ENCODE measurements at regions of chr6 and their contacts with region 1.

Region 1: DNA sequence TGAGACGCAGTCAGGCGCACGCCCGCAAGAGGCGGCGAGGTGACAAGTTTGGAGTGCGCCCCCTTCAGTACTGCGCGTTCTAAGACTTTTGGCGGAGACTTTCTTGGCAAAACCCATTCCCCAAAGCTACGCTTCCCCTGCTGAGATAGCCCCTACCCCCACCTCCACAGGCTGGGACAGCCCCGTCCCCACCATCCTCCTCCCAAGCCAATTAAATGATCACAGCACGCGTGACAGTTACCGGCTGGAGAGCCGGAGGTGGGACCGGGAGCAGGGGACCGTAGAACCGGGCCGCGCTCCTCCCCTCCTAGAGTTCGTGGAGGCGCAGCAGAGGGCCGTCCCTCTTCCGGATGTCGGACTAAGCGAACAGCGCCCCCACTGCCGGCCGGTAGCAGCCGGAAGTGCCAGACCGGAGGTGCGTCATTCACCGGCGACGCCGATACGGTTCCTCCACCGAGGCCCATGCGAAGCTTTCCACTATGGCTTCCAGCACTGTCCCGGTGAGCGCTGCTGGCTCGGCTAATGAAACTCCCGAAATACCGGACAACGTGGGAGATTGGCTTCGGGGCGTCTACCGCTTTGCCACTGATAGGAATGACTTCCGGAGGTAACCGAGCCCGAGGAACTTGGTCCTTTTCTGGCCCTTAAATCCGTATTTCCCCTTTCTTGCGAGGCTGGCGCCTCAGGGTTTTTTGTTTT is at the start of gene TOMM6:
- DNase-seq: peak; percentile 97
- H3K4me3 ChIP-seq: peak within 1 kb of the TSS; percentile 68 to 89 (median 83)
- H3K27ac ChIP-seq: peak within 1 kb of the TSS; percentile 91 to 98 (median 96)
- H3K4me1 ChIP-seq: peaks cover 0 to 32% (median 23%) of the 10 kb centered on the region in 4 donors
- H3K27me3 ChIP-seq: no peaks in the 10 kb centered on the region
- CTCF ChIP-seq: peak; percentile 86 to 98 (median 93)
- EP300 ChIP-seq: peak in 1 of 4 donors; percentile 45
- POLR2A ChIP-seq: peak; percentile 71 to 95
- total RNA-seq, gene TOMM6: 116 to 154 (median 151) TPM

Region 2: GRCh38 chr6:41072676-41073623 is 714.4 kb before region 1 on chr6 and contains the start of gene NFYA:
- intact Hi-C with region 1: loop called (anchors 10 kb)
- DNase-seq: peak; percentile 100
- H3K4me3 ChIP-seq: peak within 1 kb of the TSS; percentile 78 to 96 (median 90)
- H3K27ac ChIP-seq: peak within 1 kb of the TSS; percentile 96 to 100 (median 99)
- H3K4me1 ChIP-seq: peaks cover 0 to 32% (median 27%) of the 10 kb centered on the region in 4 donors
- H3K27me3 ChIP-seq: no peaks in the 10 kb centered on the region
- CTCF ChIP-seq: peak in 2 of 4 experiments; percentile 7 to 39
- EP300 ChIP-seq: no peak
- POLR2A ChIP-seq: peak; percentile 32 to 45
- total RNA-seq, gene NFYA: 7.6 to 12.1 (median 10.9) TPM

Region 3: GRCh38 chr6:41675176-41675770 is 112.1 kb before region 1 on chr6:
- intact Hi-C with region 1: no loop called
- DNase-seq: no peak
- H3K4me3 ChIP-seq: no peak overlapping the region
- H3K27ac ChIP-seq: no peak overlapping the region
- H3K4me1 ChIP-seq: no peaks in the 10 kb centered on the region
- H3K27me3 ChIP-seq: peaks cover 0 to 5% (median 0%) of the 10 kb centered on the region in 3 donors
- CTCF ChIP-seq: no peak
- EP300 ChIP-seq: no peak
- POLR2A ChIP-seq: no peak

Region 4: GRCh38 chr6:41705996-41706835 is 81.2 kb before region 1 on chr6:
- intact Hi-C with region 1: loop called (anchors 5 kb)
- DNase-seq: peak; percentile 93
- H3K4me3 ChIP-seq: peak overlapping the region in 1 of 4 donors; percentile 5
- H3K27ac ChIP-seq: peak overlapping the region; percentile 84 to 92 (median 88)
- H3K4me1 ChIP-seq: peaks cover 0 to 81% (median 67%) of the 10 kb centered on the region in 4 donors
- H3K27me3 ChIP-seq: no peaks in the 10 kb centered on the region
- CTCF ChIP-seq: peak; percentile 77 to 85 (median 79)
- EP300 ChIP-seq: no peak
- POLR2A ChIP-seq: no peak

Region 5: DNA sequence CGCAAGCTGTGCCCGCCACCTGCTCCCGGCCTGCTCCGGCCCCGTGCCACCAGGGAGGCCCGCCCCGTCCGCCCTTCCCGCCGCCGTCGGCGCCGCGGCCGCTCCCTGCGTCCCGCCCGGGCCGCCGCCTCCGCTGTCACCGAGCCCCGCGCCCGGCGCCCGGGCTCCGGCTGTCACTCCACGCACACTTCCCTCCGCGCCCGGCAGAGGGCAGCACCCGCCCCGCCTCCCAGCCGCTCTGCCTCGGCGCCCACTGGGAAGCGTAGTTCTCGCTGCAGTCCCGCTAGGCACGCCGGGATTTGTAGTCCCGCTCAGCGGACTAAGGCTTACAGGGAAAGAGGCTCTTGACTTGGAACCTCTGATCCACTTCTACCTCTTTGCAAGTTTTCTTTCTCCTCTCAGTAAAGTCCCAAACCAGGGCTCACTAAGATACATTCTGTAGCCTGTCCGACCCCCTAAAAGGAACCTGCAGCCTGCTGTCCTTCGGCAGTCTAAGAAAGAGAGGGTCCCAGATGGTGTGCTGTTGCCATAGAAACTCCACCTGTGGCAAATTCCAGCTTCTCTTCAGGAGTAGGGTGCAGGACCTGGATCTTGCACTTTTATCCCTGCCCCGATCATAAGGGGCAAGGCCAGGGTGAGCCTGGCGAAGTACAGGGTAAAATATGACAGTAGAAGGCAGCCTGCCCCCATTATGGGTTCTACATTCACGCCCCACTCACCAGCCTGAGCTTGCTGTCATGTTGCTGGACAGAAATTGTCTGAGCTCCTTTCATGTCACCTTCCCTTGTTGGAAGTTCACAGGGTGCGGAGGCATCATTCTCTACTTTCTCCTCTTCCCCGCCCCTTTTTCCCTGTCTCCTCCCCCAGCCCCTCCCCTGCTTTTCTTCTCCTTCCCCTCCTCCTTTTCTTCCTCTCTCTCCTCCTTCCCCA is 51.7 kb before region 1 on chr6 and contains the start of gene TFEB:
- intact Hi-C with region 1: loop called (anchors 2 kb)
- DNase-seq: peak; percentile 97
- H3K4me3 ChIP-seq: peak within 1 kb of the TSS; percentile 71 to 95 (median 88)
- H3K27ac ChIP-seq: peak within 1 kb of the TSS; percentile 96 to 98 (median 97)
- H3K4me1 ChIP-seq: peaks cover 0 to 40% (median 31%) of the 10 kb centered on the region in 4 donors
- H3K27me3 ChIP-seq: no peaks in the 10 kb centered on the region
- CTCF ChIP-seq: peak; percentile 66 to 79 (median 72)
- EP300 ChIP-seq: no peak
- POLR2A ChIP-seq: no peak
- total RNA-seq, gene TFEB: 21.0 to 28.5 (median 24.2) TPM

Region 6: GRCh38 chr6:41895300-41896233 is 108.2 kb after region 1 on chr6 and contains the start of gene USP49:
- intact Hi-C with region 1: loop called (anchors 10 kb)
- DNase-seq: peak; percentile 94
- H3K4me3 ChIP-seq: peak within 1 kb of the TSS; percentile 58 to 79 (median 75)
- H3K27ac ChIP-seq: peak within 1 kb of the TSS; percentile 81 to 89 (median 84)
- H3K4me1 ChIP-seq: peaks cover 0 to 20% (median 12%) of the 10 kb centered on the region in 4 donors
- H3K27me3 ChIP-seq: no peaks in the 10 kb centered on the region
- CTCF ChIP-seq: no peak
- EP300 ChIP-seq: no peak
- POLR2A ChIP-seq: no peak
- total RNA-seq, gene USP49: 2.1 to 10.0 (median 3.1) TPM

Region 7: DNA sequence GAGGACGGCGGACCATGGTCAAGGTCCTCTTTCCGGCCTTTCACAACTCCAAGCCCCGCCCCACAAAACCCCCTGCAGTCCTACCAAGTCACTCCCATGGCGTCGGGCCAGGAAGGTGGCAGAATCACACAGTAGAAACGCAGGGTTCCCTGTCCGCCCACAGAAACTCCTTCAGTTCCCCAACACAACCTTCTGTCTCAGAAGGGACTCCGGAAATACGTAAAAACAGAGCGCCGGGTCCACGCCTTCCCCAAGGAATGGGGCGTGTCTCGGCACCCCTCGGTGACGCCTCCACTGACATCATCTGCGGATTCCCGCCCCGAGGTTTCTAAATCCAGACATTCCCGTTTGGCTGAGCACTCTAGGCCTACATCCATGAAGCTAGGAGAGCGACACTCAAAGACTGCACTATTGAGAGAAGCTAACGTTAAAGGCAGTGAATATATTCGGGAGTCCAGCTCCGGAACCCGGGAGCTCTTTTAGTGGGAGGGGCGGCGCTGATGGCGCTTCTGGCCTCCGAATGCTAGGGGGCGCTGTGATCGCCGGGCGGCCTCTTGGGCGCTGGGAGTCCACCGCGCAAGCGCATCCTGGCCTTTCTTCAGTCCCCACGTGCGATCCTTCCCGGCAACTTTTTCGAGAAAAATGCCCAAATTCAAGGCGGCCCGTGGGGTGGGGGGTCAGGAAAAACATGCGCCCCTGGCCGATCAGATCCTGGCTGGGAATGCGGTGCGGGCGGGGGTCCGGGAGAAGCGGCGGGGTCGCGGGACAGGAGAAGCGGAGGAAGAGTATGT is 133.7 kb after region 1 on chr6 and contains the starts of genes BYSL and MED20:
- intact Hi-C with region 1: loop called (anchors 1 kb)
- DNase-seq: peak; percentile 96
- H3K4me3 ChIP-seq: peak within 1 kb of the TSS; percentile 62 to 84 (median 74)
- H3K27ac ChIP-seq: peak within 1 kb of the TSS; percentile 94 to 97 (median 96)
- H3K4me1 ChIP-seq: peaks cover 0 to 46% (median 36%) of the 10 kb centered on the region in 4 donors
- H3K27me3 ChIP-seq: no peaks in the 10 kb centered on the region
- CTCF ChIP-seq: peak; percentile 89 to 98 (median 94)
- EP300 ChIP-seq: peak in 1 of 4 donors; percentile 49
- POLR2A ChIP-seq: peak; percentile 80 to 84
- total RNA-seq, gene BYSL: 2.9 to 5.4 (median 4.6) TPM
- total RNA-seq, gene MED20: 9.9 to 15.5 (median 13.7) TPM

Region 8: GRCh38 chr6:41976794-41977484 is 189.6 kb after region 1 on chr6:
- intact Hi-C with region 1: no loop called
- DNase-seq: no peak
- H3K4me3 ChIP-seq: no peak overlapping the region
- H3K27ac ChIP-seq: no peak overlapping the region
- H3K4me1 ChIP-seq: peaks cover 0 to 15% (median 10%) of the 10 kb centered on the region in 4 donors
- H3K27me3 ChIP-seq: no peaks in the 10 kb centered on the region
- CTCF ChIP-seq: no peak
- EP300 ChIP-seq: no peak
- POLR2A ChIP-seq: no peak

Measured in sigmoid colon (tissue), 7 donors.